Dendritic cell treated with granulocyte-macrophage colony-stimulating factor and Interleukin-4, amounts not matched to agents 40 ng/mL and 50 ng/mL, for 4 days (primary cell): ENCODE measurements at regions of chr19 and their contacts with region 1.

Region 1: GRCh38 chr19:58278157-58279041 is at the start of gene ZNF8:
- H3K4me3 Mint-ChIP-seq: peak within 1 kb of the TSS; percentile 90
- H3K27ac Mint-ChIP-seq: peak within 1 kb of the TSS; percentile 96
- H3K4me1 Mint-ChIP-seq: peaks cover 22% of the 10 kb centered on the region
- H3K27me3 Mint-ChIP-seq: no peaks in the 10 kb centered on the region

Region 2: GRCh38 chr19:58182989-58183816 is 95.2 kb before region 1 on chr19 and contains the start of gene ZNF274:
- intact Hi-C with region 1: loop called (anchors 5 kb)
- H3K4me3 Mint-ChIP-seq: peak within 1 kb of the TSS; percentile 93
- H3K27ac Mint-ChIP-seq: peak within 1 kb of the TSS; percentile 100
- H3K4me1 Mint-ChIP-seq: peaks cover 22% of the 10 kb centered on the region
- H3K27me3 Mint-ChIP-seq: no peaks in the 10 kb centered on the region

Region 3: GRCh38 chr19:58261968-58262921 is 16.2 kb before region 1 on chr19:
- intact Hi-C with region 1: no loop called
- H3K4me3 Mint-ChIP-seq: no peak overlapping the region
- H3K27ac Mint-ChIP-seq: no peak overlapping the region
- H3K4me1 Mint-ChIP-seq: no peaks in the 10 kb centered on the region
- H3K27me3 Mint-ChIP-seq: no peaks in the 10 kb centered on the region

Region 4: DNA sequence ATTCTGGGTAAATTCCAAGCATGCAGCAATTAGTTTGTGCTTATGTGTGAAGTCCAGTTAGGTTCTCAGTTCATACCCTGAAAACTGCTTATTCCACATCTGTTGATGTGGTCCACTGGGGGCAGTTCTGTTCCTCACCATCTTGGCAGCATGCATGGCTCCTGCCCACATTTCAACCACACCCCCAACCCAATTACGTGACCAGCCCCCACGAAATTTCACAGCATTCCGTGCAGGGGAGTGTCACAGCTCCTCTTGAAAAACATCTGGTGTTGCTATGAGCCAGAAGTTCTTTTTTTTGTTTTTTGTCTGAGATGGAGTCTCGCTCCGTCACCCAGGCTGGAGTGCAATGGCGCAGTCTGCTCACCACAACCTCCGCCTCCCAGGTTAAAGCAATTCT is 17.7 kb after region 1 on chr19:
- intact Hi-C with region 1: no loop called
- H3K4me3 Mint-ChIP-seq: no peak overlapping the region
- H3K27ac Mint-ChIP-seq: no peak overlapping the region
- H3K4me1 Mint-ChIP-seq: peaks cover 5% of the 10 kb centered on the region
- H3K27me3 Mint-ChIP-seq: no peaks in the 10 kb centered on the region

Region 5: DNA sequence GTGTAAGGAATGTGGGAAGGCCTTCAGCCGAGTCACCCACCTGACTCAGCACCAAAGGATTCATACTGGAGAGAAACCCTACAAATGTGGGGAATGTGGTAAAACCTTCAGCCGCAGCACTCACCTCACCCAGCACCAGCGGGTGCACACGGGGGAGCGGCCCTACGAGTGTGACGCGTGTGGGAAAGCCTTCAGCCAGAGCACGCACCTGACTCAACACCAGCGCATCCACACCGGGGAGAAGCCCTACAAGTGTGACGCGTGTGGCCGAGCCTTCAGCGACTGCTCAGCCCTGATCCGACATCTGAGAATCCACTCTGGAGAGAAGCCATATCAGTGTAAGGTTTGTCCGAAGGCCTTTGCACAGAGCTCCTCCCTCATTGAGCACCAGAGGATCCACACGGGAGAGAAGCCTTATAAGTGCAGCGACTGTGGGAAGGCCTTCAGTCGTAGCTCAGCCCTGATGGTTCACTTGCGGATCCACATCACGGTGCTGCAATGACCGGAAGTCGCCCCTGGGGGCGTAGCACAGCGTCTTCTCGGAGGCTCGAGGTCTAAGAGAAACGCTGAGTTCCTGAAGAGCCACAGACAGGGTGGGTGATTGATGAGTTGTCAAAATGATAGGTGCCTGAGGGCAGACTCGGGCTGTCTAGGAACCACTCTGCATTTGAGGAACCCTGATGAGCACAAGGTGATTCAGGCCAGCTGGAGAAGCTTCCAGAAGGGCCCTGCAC is 60.6 kb after region 1 on chr19:
- intact Hi-C with region 1: no loop called
- H3K4me3 Mint-ChIP-seq: no peak overlapping the region
- H3K27ac Mint-ChIP-seq: no peak overlapping the region
- H3K4me1 Mint-ChIP-seq: peaks cover 14% of the 10 kb centered on the region
- H3K27me3 Mint-ChIP-seq: no peaks in the 10 kb centered on the region

Region 6: DNA sequence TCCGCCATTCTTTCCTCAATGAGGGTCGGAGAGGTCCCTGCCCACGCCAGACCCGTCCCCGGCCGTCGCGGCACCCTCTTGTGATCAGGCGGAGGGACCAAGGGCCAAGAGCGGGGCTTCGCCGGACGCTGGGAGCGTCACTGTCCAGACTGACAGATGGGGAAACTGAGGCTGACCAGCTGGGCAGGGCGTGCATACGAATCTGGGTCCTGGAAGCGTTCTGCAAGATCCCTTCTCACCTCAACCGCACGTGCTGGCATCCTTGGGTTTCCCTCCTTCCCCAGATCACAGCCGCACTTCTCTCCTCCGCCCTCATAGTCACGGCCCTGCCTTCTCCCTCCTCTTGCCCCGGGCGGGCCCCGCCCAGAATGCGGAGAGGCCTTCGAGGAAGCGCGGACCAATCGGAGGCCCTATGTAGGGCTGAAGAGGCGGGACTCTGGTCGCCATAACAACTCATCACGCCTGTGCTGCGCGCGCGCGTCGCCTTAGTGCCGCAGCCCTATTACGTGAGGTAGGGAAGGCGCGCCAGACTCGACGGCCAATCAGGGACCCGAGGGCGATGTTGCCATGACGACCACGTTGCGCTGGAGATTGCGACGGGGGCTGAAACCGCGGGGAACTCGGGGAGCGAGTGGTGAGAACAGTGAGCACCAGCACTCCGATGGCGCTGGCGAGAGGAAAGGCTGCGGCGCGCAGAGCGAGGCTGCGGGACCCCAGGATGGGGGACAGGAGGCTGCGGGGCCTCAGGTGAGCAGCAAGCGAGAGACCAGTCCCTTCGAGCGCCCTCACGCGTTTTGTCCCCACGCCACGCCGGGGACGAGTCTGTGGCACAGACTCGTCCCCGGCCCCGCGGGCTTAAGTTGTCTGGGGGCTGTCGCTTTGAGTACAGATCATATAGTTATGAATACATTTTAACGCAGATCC is 122.8 kb after region 1 on chr19:
- intact Hi-C with region 1: no loop called
- H3K4me3 Mint-ChIP-seq: peak overlapping the region; percentile 85
- H3K27ac Mint-ChIP-seq: peak overlapping the region; percentile 80
- H3K4me1 Mint-ChIP-seq: peaks cover 28% of the 10 kb centered on the region
- H3K27me3 Mint-ChIP-seq: peaks cover 31% of the 10 kb centered on the region